ENCODE measurements at regions of chr5 and their contacts with region 1.

Region 1: GRCh38 chr5:150846654-150847333 is 473 bp downstream of the IRGM start:
- DNase-seq: peak; percentile 30
- H3K4me3 ChIP-seq: no peak overlapping the region
- H3K27ac ChIP-seq: peak overlapping the region in 1 of 4 donors; percentile 15
- H3K4me1 ChIP-seq: peaks cover 0 to 2% (median 0%) of the 10 kb centered on the region in 4 donors
- H3K27me3 ChIP-seq: no peaks in the 10 kb centered on the region
- CTCF ChIP-seq: peak; percentile 64 to 84 (median 72)
- EP300 ChIP-seq: no peak
- POLR2A ChIP-seq: no peak

Region 2: GRCh38 chr5:149567226-149567625 is 1279.6 kb before region 1 on chr5:
- in situ Hi-C with region 1: no loop called
- intact Hi-C with region 1: no loop called
- DNase-seq: no peak
- H3K4me3 ChIP-seq: no peak overlapping the region
- H3K27ac ChIP-seq: no peak overlapping the region
- H3K4me1 ChIP-seq: peaks cover 11 to 32% (median 13%) of the 10 kb centered on the region in 4 donors
- H3K27me3 ChIP-seq: no peaks in the 10 kb centered on the region
- CTCF ChIP-seq: no peak
- EP300 ChIP-seq: no peak
- POLR2A ChIP-seq: no peak

Region 3: GRCh38 chr5:150560401-150561193 is 286.2 kb before region 1 on chr5:
- in situ Hi-C with region 1: loop called (anchors 5 to 25 kb)
- intact Hi-C with region 1: loop called (anchors 5 kb)
- DNase-seq: peak; percentile 93
- H3K4me3 ChIP-seq: no peak overlapping the region
- H3K27ac ChIP-seq: no peak overlapping the region
- H3K4me1 ChIP-seq: peaks cover 0 to 10% (median 0%) of the 10 kb centered on the region in 4 donors
- H3K27me3 ChIP-seq: no peaks in the 10 kb centered on the region
- CTCF ChIP-seq: peak; percentile 93 to 99 (median 97)
- EP300 ChIP-seq: no peak
- POLR2A ChIP-seq: no peak

Region 4: DNA sequence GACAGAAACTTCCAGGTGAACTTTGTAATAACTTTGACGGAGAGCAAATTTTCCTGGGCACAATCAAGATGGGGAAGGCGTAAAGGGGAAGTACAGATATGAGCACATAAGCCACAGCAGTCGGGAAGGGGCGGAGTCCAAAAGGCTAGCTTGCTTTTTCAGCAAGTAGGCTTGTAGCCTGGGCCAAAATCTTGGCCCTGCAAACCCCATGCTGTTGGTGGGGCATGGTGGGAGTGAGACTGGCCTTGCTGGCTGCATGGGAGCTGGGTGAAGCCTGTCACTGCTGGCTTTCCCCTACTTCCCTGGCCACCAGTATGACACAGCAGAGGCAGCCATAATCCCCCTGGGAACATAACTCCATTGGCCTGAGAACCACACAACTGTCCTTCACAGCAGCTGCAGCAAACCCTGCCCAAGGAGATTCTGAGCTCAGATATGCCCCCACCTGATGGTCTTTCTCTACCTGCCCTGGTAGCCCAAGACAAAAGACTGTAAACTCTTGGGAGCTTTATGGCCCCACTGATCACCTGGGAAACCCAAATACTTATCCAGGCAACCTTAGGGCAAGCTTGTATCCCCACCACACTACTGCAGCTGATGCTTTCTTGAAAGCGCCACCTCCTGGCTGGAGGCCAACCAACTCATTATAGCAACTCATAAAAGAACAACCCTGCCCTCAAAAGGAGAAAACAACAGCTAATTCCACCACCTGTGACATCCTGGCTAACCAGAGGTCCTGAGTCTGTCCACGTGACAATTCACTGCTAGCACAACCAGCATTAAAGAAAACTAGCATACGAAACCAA is 112.0 kb before region 1 on chr5:
- in situ Hi-C with region 1: no loop called
- intact Hi-C with region 1: no loop called
- DNase-seq: peak; percentile 40
- H3K4me3 ChIP-seq: no peak overlapping the region
- H3K27ac ChIP-seq: peak overlapping the region; percentile 3 to 72 (median 18)
- H3K4me1 ChIP-seq: peaks cover 0 to 26% (median 5%) of the 10 kb centered on the region in 4 donors
- H3K27me3 ChIP-seq: no peaks in the 10 kb centered on the region
- CTCF ChIP-seq: no peak
- EP300 ChIP-seq: no peak
- POLR2A ChIP-seq: no peak

Region 5: DNA sequence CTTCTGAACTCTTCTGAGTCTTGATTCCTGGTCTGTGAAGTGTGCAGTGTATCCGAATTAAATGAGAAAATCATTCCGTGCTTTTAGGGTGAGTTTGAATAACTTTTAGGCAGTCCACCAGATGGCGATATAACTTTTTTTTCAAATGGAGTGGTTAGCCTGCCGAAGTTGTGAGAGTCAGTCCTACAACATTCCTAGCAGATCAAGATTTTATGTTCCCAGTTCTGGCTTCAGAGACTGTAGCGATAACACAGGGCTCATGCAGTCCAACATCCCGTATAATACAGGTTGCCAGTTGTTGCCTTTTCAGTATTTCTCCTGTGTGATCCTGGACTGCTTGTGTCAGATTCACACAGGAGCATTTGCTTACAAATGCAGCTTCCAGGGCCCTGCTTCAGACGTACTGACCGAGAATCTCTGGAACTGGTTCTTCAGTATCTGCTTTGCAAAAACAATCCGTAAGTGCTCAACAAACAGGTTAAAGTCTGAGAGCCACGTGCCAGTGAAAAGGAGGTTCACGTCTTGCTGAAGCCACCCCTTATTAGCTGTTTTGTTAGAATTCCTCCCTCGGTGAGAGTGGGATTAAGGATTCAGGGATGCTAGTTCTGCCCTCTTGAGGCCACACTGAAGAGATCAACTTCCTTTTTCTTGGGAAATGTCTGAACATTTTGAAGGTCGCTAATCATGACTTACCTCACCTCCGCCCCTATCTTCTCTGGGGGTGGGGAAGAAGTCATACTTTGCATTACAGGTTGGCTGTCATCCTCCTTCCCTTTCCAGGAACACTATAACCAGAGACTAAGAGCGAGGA is 45.5 kb before region 1 on chr5:
- in situ Hi-C with region 1: loop called in 1 of 4 experiments (anchors 5 kb)
- intact Hi-C with region 1: loop called (anchors 5 kb)
- DNase-seq: peak; percentile 21
- H3K4me3 ChIP-seq: peak overlapping the region in 3 of 4 donors; percentile 4 to 35 (median 17)
- H3K27ac ChIP-seq: peak overlapping the region; percentile 22 to 67 (median 44)
- H3K4me1 ChIP-seq: peaks cover 0 to 12% (median 0%) of the 10 kb centered on the region in 4 donors
- H3K27me3 ChIP-seq: peaks cover 29% of the 10 kb centered on the region
- CTCF ChIP-seq: peak; percentile 45 to 61 (median 58)
- EP300 ChIP-seq: no peak
- POLR2A ChIP-seq: no peak

Measured in transverse colon (tissue), 4 donors.